Mucosa of descending colon (tissue), 3 donors: ENCODE measurements at regions of chr10 and their contacts with region 1.

Region 1: DNA sequence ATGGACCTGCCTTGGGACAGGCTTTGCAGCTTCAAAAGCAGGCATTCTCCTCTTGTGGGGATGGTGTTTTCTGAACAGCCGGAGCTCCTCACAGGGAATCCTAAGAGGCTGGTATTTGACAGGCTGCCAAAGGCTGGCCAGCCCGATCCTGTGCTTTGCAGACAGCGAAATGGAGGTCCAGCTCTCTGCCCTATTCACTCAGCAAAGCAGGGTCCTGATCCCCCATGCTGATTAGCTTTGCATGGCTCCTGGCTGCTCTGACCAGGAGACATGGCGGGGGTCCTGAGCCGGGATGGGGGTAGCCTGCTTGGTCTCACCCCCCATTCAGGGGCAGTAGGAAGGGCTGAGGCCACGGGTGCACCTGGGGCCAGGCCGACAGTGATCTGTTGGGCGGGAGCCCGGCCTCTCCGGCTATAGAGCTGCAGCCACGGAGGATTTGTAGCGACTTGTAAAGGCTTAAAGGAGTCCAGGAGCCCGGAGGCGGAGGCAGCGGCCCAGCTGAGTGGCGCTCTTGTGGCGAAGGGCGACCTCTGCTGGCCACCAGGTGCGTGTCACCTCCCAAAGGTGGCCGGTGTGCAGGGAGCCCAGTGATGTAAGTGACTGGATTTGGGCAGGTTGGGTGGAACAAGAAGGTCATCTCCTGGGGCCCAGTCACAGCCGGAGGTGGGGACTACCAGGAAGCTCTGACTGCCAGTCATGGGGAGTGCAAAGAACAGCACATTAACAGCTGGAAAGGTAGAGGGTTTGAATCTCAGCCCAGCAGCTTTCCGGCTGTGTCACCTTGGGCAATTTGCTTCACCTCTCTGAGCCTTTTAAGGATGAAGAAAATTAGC is 126.5 kb downstream of the ZMIZ1 start:
- DNase-seq: peak; percentile 86 to 90 (median 89)
- ATAC-seq: peak; percentile 93
- H3K4me3 ChIP-seq: no peak overlapping the region
- H3K4me1 ChIP-seq: peaks cover 6% of the 10 kb centered on the region
- CTCF ChIP-seq: peak; percentile 89

Region 2: DNA sequence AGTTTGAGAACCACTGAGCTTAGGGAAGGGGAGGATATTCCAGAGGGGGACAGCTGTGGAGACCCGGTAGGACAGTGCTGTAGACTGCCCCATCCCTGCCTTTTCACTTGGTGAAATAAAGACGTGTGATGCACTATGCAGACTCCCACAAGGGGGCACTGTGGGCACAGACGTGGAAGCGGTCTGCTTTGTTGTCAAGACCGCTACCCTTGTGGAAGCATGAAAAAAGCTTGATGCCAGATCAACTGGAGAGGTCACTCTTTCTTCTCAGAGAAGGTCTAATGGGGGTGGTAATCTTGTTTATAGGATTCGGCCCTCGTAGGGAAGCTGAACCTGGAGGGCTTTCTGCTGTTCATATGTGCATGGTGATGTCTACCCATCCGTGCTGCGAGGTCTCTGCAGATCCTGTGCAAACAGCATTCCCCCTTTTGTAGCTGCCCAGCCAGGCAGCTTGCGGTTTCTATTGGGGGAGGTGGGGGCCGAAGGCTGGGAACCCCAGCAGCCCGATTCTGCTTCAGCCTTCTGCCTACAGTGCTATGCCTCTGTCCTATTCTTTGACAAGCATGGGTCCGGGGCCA is 1147.9 kb before region 1 on chr10:
- intact Hi-C with region 1: loop called in 1 of 2 experiments (anchors 5 kb)
- DNase-seq: peak; percentile 68 to 97 (median 86)
- ATAC-seq: peak; percentile 88
- H3K4me3 ChIP-seq: no peak overlapping the region
- H3K4me1 ChIP-seq: peaks cover 3% of the 10 kb centered on the region
- CTCF ChIP-seq: peak; percentile 72

Region 3: GRCh38 chr10:78211561-78212051 is 983.7 kb before region 1 on chr10:
- intact Hi-C with region 1: loop called in 1 of 2 experiments (anchors 10 kb)
- DNase-seq: peak in 1 of 3 donors; percentile 33
- ATAC-seq: no peak
- H3K4me3 ChIP-seq: no peak overlapping the region
- H3K4me1 ChIP-seq: no peaks in the 10 kb centered on the region
- CTCF ChIP-seq: no peak

Region 4: GRCh38 chr10:78657163-78657861 is 538.0 kb before region 1 on chr10:
- intact Hi-C with region 1: loop called in 1 of 2 experiments (anchors 10 kb)
- DNase-seq: peak; percentile 64 to 93 (median 84)
- ATAC-seq: peak; percentile 97
- H3K4me3 ChIP-seq: no peak overlapping the region
- H3K4me1 ChIP-seq: no peaks in the 10 kb centered on the region
- CTCF ChIP-seq: peak; percentile 34

Region 5: DNA sequence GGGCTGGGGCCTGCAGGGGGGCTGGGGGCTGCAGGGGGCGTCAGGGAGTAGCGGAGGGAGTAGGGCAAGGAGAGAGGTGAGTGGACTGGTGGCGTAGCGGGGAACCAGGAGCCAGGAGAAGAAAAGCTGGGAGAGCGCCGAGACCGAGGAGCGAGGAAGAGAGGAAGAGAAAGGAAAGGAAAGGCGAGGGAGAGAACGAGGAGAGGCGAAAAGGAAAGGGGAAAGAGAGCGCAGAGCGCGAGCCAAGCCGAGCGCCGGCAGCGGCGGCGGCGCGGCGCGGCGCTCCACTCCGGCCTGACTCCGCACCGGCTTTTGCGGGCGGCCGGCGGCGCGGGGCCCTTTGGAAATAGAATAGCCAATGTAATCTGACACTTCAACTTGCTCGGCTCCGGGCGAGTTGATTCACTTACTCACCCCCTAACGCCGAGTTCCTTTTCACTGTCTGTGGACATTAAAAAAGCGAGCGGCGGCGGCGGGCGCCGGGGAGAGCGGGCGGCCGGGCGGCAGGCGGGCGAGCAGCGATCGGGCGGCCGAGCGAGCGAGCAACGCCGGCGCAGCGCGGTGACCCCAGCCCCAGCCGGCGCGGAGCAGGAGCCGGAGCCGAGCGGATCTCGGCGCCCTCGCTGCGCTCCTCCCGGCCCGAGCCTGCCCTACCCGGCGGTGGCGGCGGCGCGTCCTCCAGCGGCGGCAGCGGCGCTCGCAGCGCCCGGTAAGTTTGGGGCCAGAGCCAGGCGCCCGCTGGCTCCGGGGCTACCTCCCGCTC is 126.6 kb before region 1 on chr10 and contains the start of gene ZMIZ1:
- intact Hi-C with region 1: loop called (anchors 10 kb)
- DNase-seq: peak; percentile 90 to 92 (median 91)
- ATAC-seq: peak; percentile 61
- H3K4me3 ChIP-seq: peak within 1 kb of the TSS; percentile 97
- H3K4me1 ChIP-seq: peaks cover 47% of the 10 kb centered on the region
- CTCF ChIP-seq: no peak
- total RNA-seq, gene ZMIZ1: 61.4 to 103 (median 89.1) TPM

Region 6: DNA sequence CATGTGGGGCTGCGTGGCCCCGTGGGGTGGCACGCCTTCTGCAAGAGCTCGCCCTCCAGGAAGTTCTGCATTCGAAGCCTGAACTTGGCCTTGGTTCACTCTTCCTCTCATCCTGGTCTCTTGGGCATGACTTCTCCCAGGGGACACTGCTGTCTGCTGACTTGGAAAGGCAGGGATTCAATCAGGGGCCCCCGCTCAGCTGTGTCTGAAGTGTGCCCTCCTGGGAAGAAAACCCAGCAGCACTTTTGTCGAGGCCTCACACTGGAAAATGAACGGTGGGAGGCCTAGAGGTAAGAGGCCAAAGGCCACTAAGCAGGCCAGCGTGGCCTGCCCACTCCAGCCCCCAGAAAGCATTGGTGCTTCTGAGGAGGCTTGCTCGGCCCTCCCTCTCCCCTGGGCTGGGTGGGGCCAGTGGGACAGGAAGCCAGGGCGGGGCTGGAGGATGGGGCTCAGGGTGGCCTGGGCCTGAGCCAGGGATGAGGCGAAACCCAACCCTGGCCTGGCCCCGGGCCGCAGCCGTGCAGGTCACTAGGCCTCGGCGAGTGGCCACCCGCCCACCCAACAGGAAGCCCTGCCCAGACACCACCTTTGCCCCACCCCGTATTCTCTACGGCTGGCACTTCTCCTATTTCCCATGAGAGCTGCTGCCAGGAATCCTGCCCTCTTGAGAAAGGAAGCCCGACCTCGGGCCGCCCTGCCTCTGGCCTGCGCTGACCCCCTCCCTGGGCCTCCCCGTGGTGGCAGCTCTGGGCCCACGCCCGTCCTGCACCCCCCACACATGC is 45.5 kb before region 1 on chr10:
- intact Hi-C with region 1: no loop called
- DNase-seq: peak; percentile 73 to 89 (median 86)
- ATAC-seq: peak; percentile 76
- H3K4me3 ChIP-seq: no peak overlapping the region
- H3K4me1 ChIP-seq: peaks cover 52% of the 10 kb centered on the region
- CTCF ChIP-seq: no peak